Right ventricle myocardium inferior (tissue), 1 donor: ENCODE measurements at regions of chr19 and their contacts with region 1.

Region 1: DNA sequence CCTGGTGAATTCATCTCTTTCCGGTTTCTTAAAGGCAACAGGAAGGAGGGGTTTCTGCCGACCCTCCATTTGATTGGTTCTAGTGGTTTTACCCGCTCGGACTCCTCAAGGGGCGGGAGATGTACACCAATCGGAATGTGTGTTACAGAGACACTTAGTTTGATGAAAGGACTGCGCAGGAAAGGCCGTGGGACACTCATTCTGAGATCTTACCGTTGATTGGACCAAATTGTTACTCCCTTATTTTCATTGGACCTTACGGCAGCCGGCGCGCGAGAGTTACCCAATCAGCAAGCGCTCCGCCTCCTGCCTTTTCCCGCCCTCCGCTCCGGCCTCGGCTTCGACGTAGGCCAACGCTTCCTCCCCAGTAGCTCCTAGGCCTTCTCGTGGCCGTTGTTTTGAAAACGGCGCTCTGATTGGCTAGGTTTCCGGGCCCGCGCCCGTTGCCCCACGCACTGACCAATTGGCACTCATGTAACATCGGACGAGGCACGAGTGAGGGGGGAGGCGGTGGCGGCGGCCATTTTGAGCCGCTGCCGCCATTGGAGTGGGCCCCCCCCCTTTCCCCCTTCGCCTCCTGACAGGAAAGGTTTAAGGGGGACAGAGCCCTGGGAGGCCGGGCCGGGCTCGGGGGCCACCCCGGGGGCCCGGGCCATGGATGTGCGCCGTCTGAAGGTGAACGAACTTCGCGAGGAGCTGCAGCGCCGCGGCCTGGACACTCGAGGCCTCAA is at the start of gene HNRNPUL1:
- DNase-seq: peak; percentile 98
- ATAC-seq: peak; percentile 87
- total RNA-seq, gene HNRNPUL1: 110 TPM

Region 2: GRCh38 chr19:41206926-41207750 is 56.9 kb before region 1 on chr19:
- intact Hi-C with region 1: loop called (anchors 1 kb)
- DNase-seq: peak; percentile 91
- ATAC-seq: peak; percentile 91

Region 3: GRCh38 chr19:41226053-41226873 is 37.8 kb before region 1 on chr19:
- intact Hi-C with region 1: loop called (anchors 2 kb)
- DNase-seq: peak; percentile 74
- ATAC-seq: peak; percentile 69

Region 4: DNA sequence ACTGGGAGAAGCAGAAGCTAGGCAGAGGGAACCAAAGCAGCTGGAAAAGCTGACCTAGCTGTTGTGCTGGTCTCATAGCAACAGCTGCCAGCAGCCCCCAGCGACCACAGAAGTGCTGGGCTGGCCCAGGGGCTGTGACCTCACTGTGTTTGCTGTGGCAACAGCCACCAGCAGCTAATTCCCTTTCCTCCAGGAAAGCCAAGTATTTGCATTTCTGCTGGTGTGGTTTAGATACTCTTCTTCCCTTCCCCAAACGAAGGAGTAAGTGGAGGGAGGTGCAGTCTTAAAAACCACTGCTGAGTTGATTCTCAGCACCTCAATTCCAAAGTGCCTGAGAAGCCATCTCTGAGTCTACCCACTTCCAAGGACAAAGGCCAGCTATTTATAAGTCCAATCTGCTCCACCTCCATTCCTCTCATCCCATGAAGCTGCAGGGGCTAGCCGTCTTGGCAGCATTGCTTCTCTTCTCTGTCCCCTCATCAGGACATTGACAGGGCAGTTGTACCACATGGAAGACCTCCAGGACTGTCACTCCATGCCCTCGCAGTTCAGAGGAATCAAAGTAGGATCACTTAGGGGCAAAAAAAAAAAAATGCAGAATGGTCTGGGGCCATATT is 34.4 kb after region 1 on chr19:
- intact Hi-C with region 1: loop called (anchors 1 kb)
- DNase-seq: peak; percentile 92
- ATAC-seq: peak; percentile 83

Region 5: GRCh38 chr19:41310033-41310758 is 46.2 kb after region 1 on chr19 and contains the start of gene CCDC97:
- intact Hi-C with region 1: loop called (anchors 1 kb)
- DNase-seq: peak; percentile 93
- ATAC-seq: peak; percentile 83
- total RNA-seq, gene CCDC97: 14.6 TPM

Region 6: GRCh38 chr19:41363753-41364523 is 99.9 kb after region 1 on chr19 and contains the start of gene B9D2:
- intact Hi-C with region 1: loop called (anchors 5 kb)
- DNase-seq: peak; percentile 98
- ATAC-seq: peak; percentile 97
- total RNA-seq, gene B9D2: 3.2 TPM

Region 7: GRCh38 chr19:41439441-41440222 is 175.6 kb after region 1 on chr19 and contains the start of gene DMAC2:
- intact Hi-C with region 1: loop called (anchors 1 kb)
- DNase-seq: peak; percentile 98
- ATAC-seq: peak; percentile 98
- total RNA-seq, gene DMAC2: 108 TPM